WTC11 (cell line): ENCODE measurements at regions of chr19 and their contacts with region 1.

Region 1: GRCh38 chr19:51660975-51661600 is 14.5 kb upstream of the SIGLEC14 start:
- DNase-seq: peak; percentile 88
- ATAC-seq: peak; percentile 72
- H3K4me3 Mint-ChIP-seq: no peak overlapping the region
- H3K27ac Mint-ChIP-seq: no peak overlapping the region
- H3K4me1 Mint-ChIP-seq: peaks cover 6% of the 10 kb centered on the region
- H3K27me3 Mint-ChIP-seq: peaks cover 26% of the 10 kb centered on the region
- CTCF ChIP-seq: peak; percentile 46

Region 2: GRCh38 chr19:51158474-51159129 is 502.5 kb before region 1 on chr19:
- CTCF ChIA-PET with region 1: interaction called, 10 read pairs
- POLR2A ChIA-PET with region 1: no interaction called
- DNase-seq: peak; percentile 93
- ATAC-seq: peak; percentile 92
- H3K4me3 Mint-ChIP-seq: no peak overlapping the region
- H3K27ac Mint-ChIP-seq: no peak overlapping the region; the same call in 1 of the 2 replicates
- H3K4me1 Mint-ChIP-seq: peaks cover 11% of the 10 kb centered on the region
- H3K27me3 Mint-ChIP-seq: peaks cover 6% of the 10 kb centered on the region
- CTCF ChIP-seq: peak; percentile 96

Region 3: GRCh38 chr19:51407511-51408131 is 253.5 kb before region 1 on chr19:
- CTCF ChIA-PET with region 1: interaction called, 10 read pairs
- POLR2A ChIA-PET with region 1: no interaction called
- DNase-seq: peak; percentile 47
- ATAC-seq: peak; percentile 87
- H3K4me3 Mint-ChIP-seq: no peak overlapping the region
- H3K27ac Mint-ChIP-seq: peak overlapping the region; percentile 85
- H3K4me1 Mint-ChIP-seq: peaks cover 32% of the 10 kb centered on the region
- H3K27me3 Mint-ChIP-seq: peaks cover 8% of the 10 kb centered on the region
- CTCF ChIP-seq: 0 out of 2 replicates have a peak, but pooled peaks have one; percentile 27

Region 4: GRCh38 chr19:51480590-51480989 is 180.5 kb before region 1 on chr19:
- CTCF ChIA-PET with region 1: interaction called, 65 read pairs
- POLR2A ChIA-PET with region 1: no interaction called
- DNase-seq: peak; percentile 68
- ATAC-seq: peak; percentile 78
- H3K4me3 Mint-ChIP-seq: no peak overlapping the region
- H3K27ac Mint-ChIP-seq: no peak overlapping the region
- H3K4me1 Mint-ChIP-seq: no peaks in the 10 kb centered on the region
- H3K27me3 Mint-ChIP-seq: peaks cover 30% of the 10 kb centered on the region
- CTCF ChIP-seq: no peak

Region 5: GRCh38 chr19:51602189-51602854 is 58.8 kb before region 1 on chr19:
- CTCF ChIA-PET with region 1: interaction called, 25 read pairs
- POLR2A ChIA-PET with region 1: no interaction called
- DNase-seq: no peak
- ATAC-seq: no peak
- H3K4me3 Mint-ChIP-seq: peak overlapping the region; percentile 41
- H3K27ac Mint-ChIP-seq: no peak overlapping the region
- H3K4me1 Mint-ChIP-seq: peaks cover 4% of the 10 kb centered on the region; the same call in 1 of the 2 replicates
- H3K27me3 Mint-ChIP-seq: peaks cover 69% of the 10 kb centered on the region
- CTCF ChIP-seq: no peak

Region 6: GRCh38 chr19:51640386-51640785 is 20.7 kb before region 1 on chr19:
- CTCF ChIA-PET with region 1: no interaction called
- POLR2A ChIA-PET with region 1: no interaction called
- DNase-seq: no peak
- ATAC-seq: no peak
- H3K4me3 Mint-ChIP-seq: no peak overlapping the region
- H3K27ac Mint-ChIP-seq: no peak overlapping the region
- H3K4me1 Mint-ChIP-seq: no peaks in the 10 kb centered on the region
- H3K27me3 Mint-ChIP-seq: no peaks in the 10 kb centered on the region
- CTCF ChIP-seq: no peak

Region 7: DNA sequence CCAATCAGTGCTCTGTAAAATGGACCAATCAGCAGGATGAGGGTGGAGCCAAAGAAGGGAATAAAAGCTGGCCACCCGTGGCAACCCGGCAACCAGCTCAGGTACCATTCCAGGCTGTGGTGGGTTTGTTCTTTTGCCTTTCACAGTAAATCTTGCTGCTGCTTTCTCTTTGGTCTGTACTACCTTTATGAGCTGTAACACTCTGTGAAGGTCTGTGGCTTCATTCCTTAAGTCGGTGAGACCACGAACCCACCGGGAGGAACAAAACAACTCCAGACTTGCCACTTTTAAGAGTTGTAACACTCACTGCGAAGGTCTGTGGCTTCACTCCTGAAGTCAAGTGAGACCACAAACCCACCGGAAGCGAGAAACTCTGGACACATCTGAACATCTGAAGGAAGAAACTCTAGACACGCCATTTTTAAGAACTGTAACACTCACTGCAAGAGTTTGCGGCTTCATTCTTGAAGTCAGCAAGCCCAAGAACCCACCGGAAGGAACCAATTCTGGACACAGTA is 15.5 kb after region 1 on chr19:
- CTCF ChIA-PET with region 1: interaction called, 13 read pairs
- POLR2A ChIA-PET with region 1: no interaction called
- DNase-seq: no peak
- ATAC-seq: no peak
- H3K4me3 Mint-ChIP-seq: no peak overlapping the region
- H3K27ac Mint-ChIP-seq: no peak overlapping the region
- H3K4me1 Mint-ChIP-seq: no peaks in the 10 kb centered on the region
- H3K27me3 Mint-ChIP-seq: peaks cover 26% of the 10 kb centered on the region
- CTCF ChIP-seq: no peak

Region 8: GRCh38 chr19:51777570-51778462 is 116.7 kb after region 1 on chr19:
- CTCF ChIA-PET with region 1: interaction called, 32 read pairs
- POLR2A ChIA-PET with region 1: no interaction called
- DNase-seq: peak; percentile 59
- ATAC-seq: peak; percentile 96
- H3K4me3 Mint-ChIP-seq: no peak overlapping the region
- H3K27ac Mint-ChIP-seq: no peak overlapping the region
- H3K4me1 Mint-ChIP-seq: peaks cover 8% of the 10 kb centered on the region
- H3K27me3 Mint-ChIP-seq: peaks cover 37% of the 10 kb centered on the region
- CTCF ChIP-seq: peak; percentile 63